Heart left ventricle (tissue), 16 donors: ENCODE measurements at regions of chr6 and their contacts with region 1.

Region 1: DNA sequence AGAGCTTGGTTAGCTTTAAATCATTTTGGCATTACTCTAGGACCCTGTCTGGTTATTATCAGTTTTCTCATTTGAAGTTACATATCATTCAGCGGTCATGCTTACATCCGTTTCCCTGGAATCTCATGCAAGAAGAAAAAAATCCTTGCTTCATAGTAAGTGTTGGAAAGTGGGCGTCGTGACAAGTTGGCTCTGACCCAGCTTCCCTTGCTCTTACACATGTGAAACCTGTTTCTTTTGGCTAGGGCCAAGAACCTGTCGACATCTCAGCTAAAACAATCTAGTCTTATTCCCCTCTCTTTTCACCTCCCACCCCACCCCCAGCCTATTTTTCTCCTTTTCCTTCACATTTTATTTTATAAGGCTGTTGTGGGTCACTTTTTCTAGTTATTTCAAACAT is 45.5 kb downstream of the ANKS1A start:
- DNase-seq: peak; percentile 83 to 91 (median 85)
- ATAC-seq: peak; percentile 39 to 84 (median 83)
- H3K4me3 ChIP-seq: no peak overlapping the region
- H3K27ac ChIP-seq: peak overlapping the region in 9 of 12 donors; percentile 31 to 74 (median 48)
- H3K4me1 ChIP-seq: peaks cover 0 to 62% (median 42%) of the 10 kb centered on the region in 12 donors
- H3K27me3 ChIP-seq: no peaks in the 10 kb centered on the region
- CTCF ChIP-seq: no peak
- POLR2A ChIP-seq: no peak

Region 2: GRCh38 chr6:34575326-34575725 is 359.2 kb before region 1 on chr6:
- intact Hi-C with region 1: no loop called
- DNase-seq: no peak
- ATAC-seq: peak in 1 of 4 donors; percentile 9
- H3K4me3 ChIP-seq: no peak overlapping the region
- H3K27ac ChIP-seq: no peak overlapping the region
- H3K4me1 ChIP-seq: no peaks in the 10 kb centered on the region
- H3K27me3 ChIP-seq: peaks cover 0 to 3% (median 0%) of the 10 kb centered on the region in 9 donors
- CTCF ChIP-seq: no peak
- POLR2A ChIP-seq: no peak

Region 3: GRCh38 chr6:34791701-34792235 is 142.7 kb before region 1 on chr6 and contains the start of gene BLTP3A:
- intact Hi-C with region 1: no loop called
- DNase-seq: peak; percentile 68 to 89 (median 83)
- ATAC-seq: peak; percentile 75 to 95 (median 91)
- H3K4me3 ChIP-seq: peak within 1 kb of the TSS; percentile 73 to 99 (median 94)
- H3K27ac ChIP-seq: peak within 1 kb of the TSS; percentile 85 to 98 (median 96)
- H3K4me1 ChIP-seq: peaks cover 0 to 36% (median 16%) of the 10 kb centered on the region in 12 donors
- H3K27me3 ChIP-seq: no peaks in the 10 kb centered on the region
- CTCF ChIP-seq: peak in 1 of 12 donors; percentile 0
- POLR2A ChIP-seq: peak; percentile 28 to 36
- total RNA-seq, gene BLTP3A: 16.5 to 36.8 (median 22.4) TPM

Region 4: DNA sequence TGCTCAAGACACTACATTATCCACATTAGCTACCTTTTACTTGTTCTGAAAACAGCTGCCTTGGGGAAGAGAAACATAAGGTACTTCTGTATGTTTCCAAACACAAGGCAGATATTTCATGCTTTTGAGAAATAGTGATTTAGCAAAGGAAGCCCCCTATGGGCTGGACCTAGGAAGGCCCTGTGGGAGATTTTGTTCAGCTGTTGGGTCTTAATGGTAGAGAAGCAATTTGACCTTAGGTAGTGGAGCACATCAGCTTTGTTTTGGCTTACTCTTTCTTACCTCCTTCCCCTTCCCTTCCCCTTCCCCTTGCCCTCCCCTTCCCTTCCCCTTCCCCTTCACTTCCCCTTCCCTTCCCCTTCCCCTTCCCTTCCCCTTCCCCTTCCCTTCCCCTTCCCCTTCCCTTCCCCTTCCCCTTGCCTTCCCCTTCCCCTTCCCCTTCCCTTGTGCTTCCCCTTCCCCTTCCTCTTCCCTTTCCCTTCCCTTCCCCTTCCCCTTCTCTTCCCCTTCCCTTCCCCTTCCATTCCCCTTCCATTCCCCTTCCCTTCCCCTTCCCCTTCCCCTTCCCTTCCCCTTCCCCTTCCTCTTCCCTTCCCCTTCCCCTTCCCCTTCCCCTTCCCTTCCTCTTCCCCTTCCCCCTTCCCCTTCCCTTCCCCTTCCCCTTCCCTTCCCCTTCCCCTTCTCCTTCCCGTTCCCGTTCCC is 39.2 kb after region 1 on chr6:
- intact Hi-C with region 1: loop called in 1 of 10 experiments (anchors 5 kb)
- DNase-seq: no peak
- ATAC-seq: no peak
- H3K4me3 ChIP-seq: no peak overlapping the region
- H3K27ac ChIP-seq: no peak overlapping the region
- H3K4me1 ChIP-seq: peaks cover 0 to 3% (median 0%) of the 10 kb centered on the region in 12 donors
- H3K27me3 ChIP-seq: no peaks in the 10 kb centered on the region
- CTCF ChIP-seq: peak in 5 of 12 donors; percentile 16 to 26 (median 20)
- POLR2A ChIP-seq: no peak

Region 5: GRCh38 chr6:34986845-34987246 is 52.3 kb after region 1 on chr6:
- intact Hi-C with region 1: no loop called
- DNase-seq: peak in 4 of 5 donors; percentile 58 to 78 (median 68)
- ATAC-seq: peak; percentile 56 to 86 (median 83)
- H3K4me3 ChIP-seq: no peak overlapping the region
- H3K27ac ChIP-seq: peak overlapping the region in 2 of 12 donors; percentile 15 to 61
- H3K4me1 ChIP-seq: peaks cover 0 to 12% (median 7%) of the 10 kb centered on the region in 12 donors
- H3K27me3 ChIP-seq: no peaks in the 10 kb centered on the region
- CTCF ChIP-seq: peak; percentile 77 to 96 (median 88)
- POLR2A ChIP-seq: no peak